ENCODE measurements at regions of chr5 and their contacts with region 1.

Region 1: DNA sequence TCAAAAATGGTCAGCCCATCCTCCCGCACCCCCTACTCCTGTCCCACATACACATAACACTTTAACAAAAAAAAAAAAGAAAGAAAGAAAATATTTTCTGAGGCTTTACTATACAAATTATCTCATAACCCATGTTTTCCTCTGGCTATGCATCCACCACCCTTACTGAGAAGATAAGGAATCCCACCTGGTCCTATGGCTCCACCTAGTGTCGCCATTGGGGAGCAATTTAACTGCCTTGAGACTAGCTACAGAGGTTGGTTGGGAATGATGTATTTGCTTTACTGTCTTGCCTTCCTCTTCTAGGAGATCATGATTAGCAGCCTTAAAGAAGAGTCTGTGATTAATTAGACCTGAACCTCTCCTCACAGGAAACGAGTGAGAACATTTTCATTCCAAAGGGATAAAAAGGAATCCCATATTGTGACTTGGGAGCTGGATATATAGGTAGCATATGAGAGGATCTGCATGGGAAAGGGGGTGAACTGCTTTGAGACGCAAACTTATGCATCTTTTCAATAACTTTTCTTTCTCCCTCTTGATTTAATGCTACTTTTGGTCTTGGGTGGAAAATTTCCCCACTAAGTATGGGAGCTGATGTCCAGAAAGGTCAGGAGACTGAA is 77.7 kb upstream of the SELENOP start:
- DNase-seq: peak; percentile 35 to 87 (median 76)
- H3K4me3 ChIP-seq: no peak overlapping the region
- H3K27ac ChIP-seq: peak overlapping the region in 1 of 59 donors; percentile 26
- H3K27me3 ChIP-seq: peaks cover 0 to 5% (median 0%) of the 10 kb centered on the region in 45 donors
- CTCF ChIP-seq: peak; percentile 64 to 99 (median 88)

Region 2: DNA sequence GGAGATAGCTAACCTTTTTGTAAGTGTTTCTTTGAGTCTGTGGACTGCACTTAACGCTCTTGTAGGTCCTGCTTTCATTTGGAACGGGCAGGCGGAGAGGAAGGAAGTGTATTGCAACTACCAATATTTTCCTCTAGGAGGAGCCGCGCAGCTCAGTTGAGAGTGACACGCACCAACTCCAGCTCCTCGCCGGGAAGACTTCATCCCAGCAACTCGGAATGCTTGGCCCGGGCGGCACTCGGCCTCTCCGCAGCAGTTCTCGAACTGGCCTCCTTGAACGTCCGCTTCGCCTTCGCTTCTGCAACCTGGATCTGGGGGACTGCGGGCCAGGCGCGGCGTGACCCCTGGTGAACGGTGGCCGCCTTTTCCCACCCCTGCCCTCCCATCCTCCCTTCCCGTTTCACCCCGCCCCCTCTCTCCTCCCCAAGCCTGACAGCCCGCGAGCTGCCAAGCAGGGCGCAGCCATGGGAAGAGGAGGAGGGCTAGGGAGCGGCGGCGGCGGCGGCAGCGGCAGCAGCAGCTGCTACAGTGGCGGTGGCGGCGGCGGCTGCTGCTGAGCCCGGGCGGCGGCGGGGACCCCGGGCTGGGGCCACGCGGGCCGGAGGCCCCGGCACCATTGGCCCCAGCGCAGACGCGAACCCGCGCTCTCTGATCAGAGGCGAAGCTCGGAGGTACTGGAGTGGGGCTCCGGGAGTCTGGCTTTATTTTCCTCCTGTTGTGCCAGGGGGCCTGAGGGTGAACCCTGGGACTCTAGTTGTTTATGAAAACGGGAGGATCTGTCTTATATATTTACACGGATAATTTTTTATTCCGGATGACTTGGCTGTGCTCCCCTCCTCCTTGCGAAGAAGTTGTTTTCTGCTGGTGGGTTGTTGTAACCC is 465.9 kb before region 1 on chr5 and contains the start of gene GHR:
- intact Hi-C with region 1: loop called in 1 of 2 experiments (anchors 5 kb)
- DNase-seq: peak; percentile 21 to 85 (median 81)
- H3K4me3 ChIP-seq: peak within 1 kb of the TSS; percentile 51 to 84 (median 68)
- H3K27ac ChIP-seq: peak within 1 kb of the TSS in 50 of 59 donors; percentile 21 to 86 (median 70)
- H3K27me3 ChIP-seq: peaks cover 0 to 9% (median 0%) of the 10 kb centered on the region in 45 donors
- CTCF ChIP-seq: peak; percentile 57 to 90 (median 79)
- total RNA-seq, gene GHR: 1.2 to 8.0 (median 4.0) TPM

Region 3: DNA sequence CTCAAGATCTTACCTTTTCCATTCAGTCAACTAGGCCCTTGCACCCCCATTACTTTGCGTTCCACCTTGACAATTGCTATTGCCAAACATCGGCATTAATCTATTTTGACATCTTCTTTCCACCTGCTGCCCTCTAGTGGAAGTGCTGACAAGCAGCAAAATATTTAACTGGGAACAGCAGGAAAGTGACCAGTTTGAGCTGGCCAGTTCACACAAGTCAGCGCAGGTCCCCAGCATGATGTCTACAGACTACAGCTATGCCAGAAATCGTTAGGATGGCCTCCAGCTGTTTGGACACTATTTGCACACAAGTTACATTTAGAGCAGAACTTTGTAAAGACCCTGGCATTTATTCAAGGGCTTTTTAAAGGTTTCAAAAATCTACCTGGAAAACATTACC is 306.1 kb before region 1 on chr5:
- intact Hi-C with region 1: loop called in 1 of 2 experiments (anchors 10 kb)
- DNase-seq: peak in 3 of 10 donors; percentile 10 to 34 (median 28)
- H3K4me3 ChIP-seq: no peak overlapping the region
- H3K27ac ChIP-seq: no peak overlapping the region
- H3K27me3 ChIP-seq: peaks cover 0 to 5% (median 0%) of the 10 kb centered on the region in 45 donors
- CTCF ChIP-seq: peak; percentile 56 to 83 (median 76)

Region 4: GRCh38 chr5:42767491-42768105 is 121.8 kb before region 1 on chr5:
- intact Hi-C with region 1: loop called (anchors 5 to 10 kb)
- DNase-seq: no peak
- H3K4me3 ChIP-seq: no peak overlapping the region
- H3K27ac ChIP-seq: no peak overlapping the region
- H3K27me3 ChIP-seq: peaks cover 0 to 4% (median 0%) of the 10 kb centered on the region in 45 donors
- CTCF ChIP-seq: peak; percentile 44 to 86 (median 70)

Region 5: DNA sequence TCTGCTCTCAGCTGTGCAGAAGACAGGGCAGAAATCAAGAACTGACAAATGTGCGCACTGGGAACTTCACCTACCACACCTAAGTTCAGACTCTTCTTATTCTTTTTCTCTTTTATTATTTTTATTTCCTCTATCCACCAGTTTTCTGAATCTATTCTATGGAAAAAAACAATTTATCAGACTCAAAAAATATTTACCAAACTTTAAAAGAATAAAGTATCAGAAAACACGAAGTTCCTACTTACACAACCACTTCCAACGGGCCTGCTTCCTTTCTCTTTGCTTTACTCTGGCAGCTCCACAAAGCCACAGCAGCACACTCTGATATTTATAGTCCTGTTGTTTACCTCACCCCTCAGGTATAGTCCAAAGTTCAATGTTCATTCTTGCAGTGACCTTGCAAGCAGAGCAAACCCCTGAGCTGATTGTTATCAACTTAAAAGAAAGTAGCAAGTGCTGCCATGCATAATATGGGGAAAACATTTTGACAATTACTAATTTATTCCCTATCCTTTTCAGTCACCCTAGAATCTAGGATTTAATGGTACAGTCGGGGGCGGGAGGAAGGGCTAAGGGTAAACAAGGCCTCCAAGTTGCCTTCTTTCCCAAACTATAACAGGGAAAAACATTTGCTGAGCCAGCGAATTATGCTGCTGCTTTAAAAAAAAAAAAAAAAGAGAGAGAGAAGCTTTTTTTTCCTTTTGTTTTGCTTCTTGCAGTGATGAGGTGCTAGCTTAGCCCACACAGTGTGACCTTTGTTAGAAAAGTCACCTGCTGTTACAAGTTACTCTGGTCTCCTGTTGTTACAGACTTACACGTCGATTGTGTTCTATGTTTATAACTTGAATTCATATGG is 77.6 kb before region 1 on chr5 and contains the start of gene SELENOP:
- intact Hi-C with region 1: loop called (anchors 2 to 5 kb)
- DNase-seq: peak in 3 of 10 donors; percentile 26 to 74 (median 62)
- H3K4me3 ChIP-seq: peak within 1 kb of the TSS; percentile 41 to 81 (median 65)
- H3K27ac ChIP-seq: peak within 1 kb of the TSS; percentile 40 to 99 (median 94)
- H3K27me3 ChIP-seq: no peaks in the 10 kb centered on the region
- CTCF ChIP-seq: peak in 5 of 56 donors; percentile 3 to 19 (median 9)
- total RNA-seq, gene SELENOP: 61.5 to 884 (median 225) TPM

Region 6: DNA sequence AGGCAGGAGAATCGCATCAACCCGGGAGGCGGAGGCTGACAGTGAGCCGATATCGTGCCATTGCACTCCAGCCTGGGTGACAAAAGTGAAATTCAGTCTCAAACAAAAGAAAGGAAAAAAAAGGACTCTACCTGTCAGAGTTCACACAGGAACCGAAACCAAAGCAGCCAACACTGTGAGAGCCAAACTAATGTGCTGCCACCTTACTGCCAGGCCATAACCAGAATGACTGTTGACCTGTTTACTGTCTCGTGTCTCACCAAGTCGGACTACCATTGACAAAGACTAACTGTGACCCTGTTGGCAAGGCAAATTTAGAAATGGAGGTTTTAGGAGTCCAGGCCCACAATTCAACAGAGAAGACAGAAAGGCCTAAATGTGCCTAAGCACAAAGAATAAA is 38.3 kb after region 1 on chr5:
- intact Hi-C with region 1: no loop called
- DNase-seq: no peak
- H3K4me3 ChIP-seq: no peak overlapping the region
- H3K27ac ChIP-seq: no peak overlapping the region
- H3K27me3 ChIP-seq: peaks cover 0 to 36% (median 0%) of the 10 kb centered on the region in 45 donors
- CTCF ChIP-seq: no peak

Measured in dorsolateral prefrontal cortex (tissue), 120 donors.